ENCODE measurements at regions of chr14 and their contacts with region 1.

Region 1: DNA sequence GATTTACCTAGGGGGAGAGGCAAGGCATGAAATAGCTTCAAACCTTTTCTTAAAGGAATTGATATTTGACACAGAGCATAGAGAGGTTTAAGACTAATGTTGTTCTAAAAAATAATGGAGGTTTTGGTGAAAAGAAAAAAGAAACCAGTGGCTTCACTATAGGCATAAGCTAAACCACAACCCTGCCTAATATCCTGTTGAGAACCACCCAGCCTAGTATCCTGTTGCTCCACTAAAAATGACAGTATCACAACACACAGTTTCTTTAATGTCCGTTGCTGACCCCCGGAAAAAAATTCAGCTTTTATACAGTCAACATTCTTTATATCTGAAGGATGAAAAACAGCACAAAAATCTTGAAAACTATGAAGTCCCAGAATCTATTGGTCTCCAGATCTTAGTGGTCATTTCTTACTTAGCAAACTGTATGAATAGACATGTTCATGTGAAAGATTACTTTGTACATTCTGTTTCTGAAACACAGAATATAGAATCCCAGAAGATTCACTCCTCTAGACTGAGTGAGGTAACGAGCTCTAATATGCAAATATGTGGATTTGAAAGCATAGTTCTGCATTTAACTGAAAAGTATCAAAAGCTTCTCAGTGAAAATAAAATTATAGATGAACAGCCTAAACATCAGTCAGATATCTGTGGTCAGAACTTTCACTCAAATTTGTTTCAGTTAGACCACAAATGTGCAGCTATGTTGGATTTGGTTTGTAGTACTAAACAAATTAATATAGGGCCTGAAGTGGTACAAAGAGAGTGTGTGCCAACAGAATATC is 40.5 kb downstream of the GALC start:
- DNase-seq: no peak
- ATAC-seq: peak; percentile 72
- H3K4me3 Mint-ChIP-seq: peak overlapping the region; percentile 34
- H3K27ac Mint-ChIP-seq: peak overlapping the region; percentile 81
- H3K4me1 Mint-ChIP-seq: peaks cover 29% of the 10 kb centered on the region
- H3K27me3 Mint-ChIP-seq: no peaks in the 10 kb centered on the region
- CTCF ChIP-seq: no peak

Region 2: DNA sequence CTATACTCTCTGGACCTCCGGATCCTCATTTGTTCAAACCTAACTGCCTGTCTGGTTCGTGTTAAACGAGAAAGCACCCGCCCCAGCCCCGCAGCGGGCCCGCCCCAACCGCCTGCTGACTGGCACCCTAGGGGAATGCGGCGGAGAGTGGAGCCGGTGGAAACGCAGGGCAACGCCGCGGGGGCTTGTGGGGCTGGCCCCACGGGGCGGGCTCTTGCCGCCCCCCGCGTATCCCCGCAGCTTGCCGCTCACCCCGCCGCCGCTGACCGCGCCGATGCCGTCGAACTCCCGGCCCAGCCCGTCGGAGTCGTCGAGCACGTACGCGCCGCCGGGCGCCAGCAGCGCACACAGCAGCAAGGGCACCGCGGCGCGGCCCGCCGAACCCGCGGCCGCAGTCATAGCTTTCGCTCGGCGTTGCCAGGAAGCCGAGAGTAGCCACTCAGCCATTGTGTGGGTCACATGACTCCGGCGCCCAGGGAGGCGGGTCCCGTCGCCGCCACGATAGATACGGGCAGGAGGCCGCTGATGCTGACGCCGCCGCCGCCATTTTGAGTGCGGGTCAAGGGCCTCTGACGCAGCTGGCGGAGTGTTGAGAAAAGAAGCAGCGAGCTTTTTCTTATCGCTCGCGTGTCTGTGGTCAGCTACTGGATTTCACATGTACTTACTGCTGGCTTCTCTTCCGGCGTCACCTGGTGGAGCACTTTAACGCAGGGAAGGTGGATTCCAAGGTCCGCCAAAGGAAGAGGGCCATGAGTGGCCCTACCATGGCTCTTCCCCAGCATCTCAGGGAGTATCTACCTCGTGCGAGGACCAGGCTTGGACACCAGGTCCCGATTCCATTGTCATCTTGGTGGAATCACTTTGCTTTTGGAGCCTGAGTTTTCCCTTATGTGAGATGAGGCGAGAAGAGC is 40.5 kb after region 1 on chr14 and contains the start of gene GALC:
- CTCF ChIA-PET with region 1: no interaction called
- POLR2A ChIA-PET with region 1: interaction called, 3 read pairs
- intact Hi-C with region 1: loop called (anchors 5 kb)
- DNase-seq: peak; percentile 98
- ATAC-seq: peak; percentile 86
- H3K4me3 Mint-ChIP-seq: peak within 1 kb of the TSS; percentile 86
- H3K27ac Mint-ChIP-seq: peak within 1 kb of the TSS; percentile 96
- H3K4me1 Mint-ChIP-seq: peaks cover 55% of the 10 kb centered on the region
- H3K27me3 Mint-ChIP-seq: no peaks in the 10 kb centered on the region
- CTCF ChIP-seq: no peak
- total RNA-seq, gene GALC: 8.6 to 11.3 TPM